K562 (cell line): ENCODE measurements at regions of chr9 and their contacts with region 1.

Region 1: GRCh38 chr9:127897218-127898211 is 1.9 kb downstream of the ST6GALNAC6 start:
- DNase-seq: peak; percentile 85 to 95 (median 94)
- ATAC-seq: peak; percentile 83
- H3K4me3 ChIP-seq: peak overlapping the region; percentile 14; the same call in 1 of the 2 replicates
- H3K27ac ChIP-seq: peak overlapping the region; percentile 58
- H3K4me1 ChIP-seq: peaks cover 11 to 44% of the 10 kb centered on the region in 2 experiments
- H3K27me3 ChIP-seq: no peaks in the 10 kb centered on the region
- CTCF ChIP-seq: no peak
- EP300 ChIP-seq: no peak; the same call in 1 of the 2 replicates
- POLR2A ChIP-seq: no peak
- RAD21 ChIP-seq: no peak

Region 2: GRCh38 chr9:127779136-127779981 is 118.2 kb before region 1 on chr9:
- CTCF ChIA-PET with region 1: no interaction called
- POLR2A ChIA-PET with region 1: no interaction called
- in situ Hi-C with region 1: no loop called
- intact Hi-C with region 1: no loop called
- DNase-seq: peak in 1 of 4 experiments; percentile 38
- ATAC-seq: peak; percentile 59
- H3K4me3 ChIP-seq: no peak overlapping the region
- H3K27ac ChIP-seq: no peak overlapping the region; the same call in 2 of the 3 replicates
- H3K4me1 ChIP-seq: peaks cover 24 to 49% of the 10 kb centered on the region in 2 experiments
- H3K27me3 ChIP-seq: no peaks in the 10 kb centered on the region
- CTCF ChIP-seq: no peak
- EP300 ChIP-seq: 0 out of 2 replicates have a peak, but pooled peaks have one; percentile 1
- POLR2A ChIP-seq: no peak
- RAD21 ChIP-seq: no peak

Region 3: DNA sequence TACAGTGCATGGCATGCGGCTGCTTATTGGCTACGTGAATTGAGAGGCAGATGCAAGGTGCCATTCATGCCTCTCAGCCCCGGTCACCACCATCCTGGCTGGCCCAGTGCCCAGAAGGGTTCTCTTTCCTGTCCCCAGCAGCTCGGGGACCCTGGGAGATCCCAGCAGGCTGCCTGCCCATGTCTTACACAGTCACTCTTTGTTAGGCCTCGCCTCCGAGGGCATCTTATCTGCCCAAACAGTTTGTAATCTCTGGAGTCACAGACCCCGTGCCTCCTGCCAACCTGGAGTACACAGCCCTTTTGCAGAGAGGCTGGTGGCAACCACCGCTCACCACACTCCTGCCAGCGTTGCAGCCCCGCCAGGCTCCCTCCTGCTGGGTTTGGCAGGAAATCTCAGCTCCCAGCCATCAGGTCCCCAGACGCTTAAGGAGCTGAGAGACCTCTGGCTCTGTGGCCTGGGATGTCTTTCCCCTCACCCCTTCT is 13.0 kb before region 1 on chr9:
- CTCF ChIA-PET with region 1: no interaction called
- POLR2A ChIA-PET with region 1: interaction called, 12 read pairs
- in situ Hi-C with region 1: no loop called
- intact Hi-C with region 1: no loop called
- DNase-seq: no peak
- ATAC-seq: no peak
- H3K4me3 ChIP-seq: no peak overlapping the region
- H3K27ac ChIP-seq: no peak overlapping the region
- H3K4me1 ChIP-seq: peaks cover 0 to 29% of the 10 kb centered on the region in 2 experiments; a peak in 3 of 5 replicates
- H3K27me3 ChIP-seq: no peaks in the 10 kb centered on the region
- CTCF ChIP-seq: no peak
- EP300 ChIP-seq: no peak
- POLR2A ChIP-seq: no peak
- RAD21 ChIP-seq: no peak